H1 (cell line): ENCODE measurements at regions of chr22 and their contacts with region 1.

Region 1: GRCh38 chr22:39808081-39808480 is 85.5 kb downstream of the ENTHD1 start:
- DNase-seq: peak in 1 of 2 experiments; percentile 73
- H3K4me3 ChIP-seq: no peak overlapping the region
- H3K27ac ChIP-seq: no peak overlapping the region
- H3K4me1 ChIP-seq: peaks cover 0 to 3% (median 0%) of the 10 kb centered on the region in 4 experiments; a peak in 1 of 7 replicates
- H3K27me3 ChIP-seq: peaks cover 0 to 2% (median 0%) of the 10 kb centered on the region in 4 experiments; a peak in 3 of 7 replicates
- CTCF ChIP-seq: peak; percentile 69 to 84 (median 76)
- EP300 ChIP-seq: no peak
- POLR2A ChIP-seq: no peak
- RAD21 ChIP-seq: peak; percentile 62 to 72

Region 2: GRCh38 chr22:39785232-39785631 is 22.8 kb before region 1 on chr22:
- CTCF ChIA-PET with region 1: interaction called, 10 read pairs
- POLR2A ChIA-PET with region 1: no interaction called
- DNase-seq: no peak
- H3K4me3 ChIP-seq: no peak overlapping the region
- H3K27ac ChIP-seq: no peak overlapping the region
- H3K4me1 ChIP-seq: no peaks in the 10 kb centered on the region
- H3K27me3 ChIP-seq: no peaks in the 10 kb centered on the region; a peak in 1 of 7 replicates
- CTCF ChIP-seq: no peak
- EP300 ChIP-seq: no peak
- POLR2A ChIP-seq: no peak
- RAD21 ChIP-seq: no peak

Region 3: DNA sequence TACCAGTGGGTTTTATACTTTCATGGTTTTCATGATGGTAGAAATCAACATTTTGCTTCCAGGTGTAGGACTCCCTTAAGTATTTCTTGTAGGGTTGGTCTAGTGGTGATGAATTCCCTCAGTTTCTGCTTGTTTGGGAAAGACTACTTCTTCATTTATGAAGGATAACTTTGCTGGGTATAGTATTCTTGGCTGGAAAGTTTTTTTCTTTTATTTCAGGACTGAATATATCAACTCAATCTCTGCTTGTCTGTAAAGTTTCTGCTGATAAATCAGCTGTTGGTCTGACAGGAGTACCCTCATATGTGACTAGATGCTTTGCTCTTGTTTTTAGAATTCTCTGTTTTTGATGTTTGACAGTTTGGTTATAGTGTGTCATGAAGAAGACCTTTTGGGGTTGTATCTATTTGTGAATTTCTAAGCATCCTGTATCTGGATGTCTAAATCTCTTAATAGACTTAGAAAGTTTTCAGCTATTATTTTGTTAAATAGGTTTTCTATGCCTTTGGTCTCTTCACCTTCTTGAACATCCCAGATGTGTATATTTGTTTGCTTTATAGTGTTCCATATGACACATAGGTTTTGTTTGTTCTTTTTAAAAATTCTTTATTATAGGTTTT is 10.4 kb before region 1 on chr22:
- CTCF ChIA-PET with region 1: interaction called, 14 read pairs
- POLR2A ChIA-PET with region 1: no interaction called
- DNase-seq: no peak
- H3K4me3 ChIP-seq: no peak overlapping the region
- H3K27ac ChIP-seq: no peak overlapping the region
- H3K4me1 ChIP-seq: no peaks in the 10 kb centered on the region
- H3K27me3 ChIP-seq: 0 out of 7 replicates have a peak, but pooled peaks cover 0 to 1% (median 0%) of the 10 kb centered on the region in 4 experiments
- CTCF ChIP-seq: no peak
- EP300 ChIP-seq: no peak
- POLR2A ChIP-seq: no peak
- RAD21 ChIP-seq: no peak

Region 4: DNA sequence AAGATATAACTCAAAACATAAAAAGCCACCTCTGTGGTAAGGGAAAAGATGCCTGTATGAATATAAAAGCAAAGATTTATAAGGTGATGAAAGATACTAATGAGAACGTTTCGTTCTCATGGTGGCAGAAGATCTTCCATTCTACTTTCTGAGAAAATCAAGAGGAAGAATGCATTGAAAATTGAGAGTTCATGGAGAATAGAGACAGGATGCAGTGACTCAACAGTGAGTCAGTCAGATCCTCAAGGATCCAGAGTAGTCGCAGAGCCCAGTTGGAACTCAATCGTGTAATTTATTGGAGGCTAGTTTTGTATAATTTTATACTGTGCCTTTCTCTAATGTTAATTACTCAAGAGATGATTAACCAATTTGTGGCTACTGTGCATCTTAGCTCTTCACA is 12.2 kb after region 1 on chr22:
- CTCF ChIA-PET with region 1: interaction called, 10 read pairs
- POLR2A ChIA-PET with region 1: interaction called, 3 read pairs
- DNase-seq: no peak
- H3K4me3 ChIP-seq: no peak overlapping the region
- H3K27ac ChIP-seq: no peak overlapping the region
- H3K4me1 ChIP-seq: no peaks in the 10 kb centered on the region
- H3K27me3 ChIP-seq: no peaks in the 10 kb centered on the region
- CTCF ChIP-seq: no peak
- EP300 ChIP-seq: no peak
- POLR2A ChIP-seq: no peak
- RAD21 ChIP-seq: no peak

Region 5: GRCh38 chr22:39839917-39840510 is 31.9 kb after region 1 on chr22:
- CTCF ChIA-PET with region 1: no interaction called
- POLR2A ChIA-PET with region 1: no interaction called
- DNase-seq: no peak
- H3K4me3 ChIP-seq: no peak overlapping the region
- H3K27ac ChIP-seq: no peak overlapping the region
- H3K4me1 ChIP-seq: no peaks in the 10 kb centered on the region
- H3K27me3 ChIP-seq: no peaks in the 10 kb centered on the region
- CTCF ChIP-seq: no peak
- EP300 ChIP-seq: no peak
- POLR2A ChIP-seq: no peak
- RAD21 ChIP-seq: no peak

Region 6: GRCh38 chr22:39851606-39852315 is 43.7 kb after region 1 on chr22:
- CTCF ChIA-PET with region 1: no interaction called
- POLR2A ChIA-PET with region 1: no interaction called
- DNase-seq: no peak
- H3K4me3 ChIP-seq: no peak overlapping the region
- H3K27ac ChIP-seq: no peak overlapping the region
- H3K4me1 ChIP-seq: no peaks in the 10 kb centered on the region
- H3K27me3 ChIP-seq: no peaks in the 10 kb centered on the region
- CTCF ChIP-seq: no peak
- EP300 ChIP-seq: no peak
- POLR2A ChIP-seq: no peak
- RAD21 ChIP-seq: no peak